ENCODE measurements at regions of chr16 and their contacts with region 1.

Region 1: DNA sequence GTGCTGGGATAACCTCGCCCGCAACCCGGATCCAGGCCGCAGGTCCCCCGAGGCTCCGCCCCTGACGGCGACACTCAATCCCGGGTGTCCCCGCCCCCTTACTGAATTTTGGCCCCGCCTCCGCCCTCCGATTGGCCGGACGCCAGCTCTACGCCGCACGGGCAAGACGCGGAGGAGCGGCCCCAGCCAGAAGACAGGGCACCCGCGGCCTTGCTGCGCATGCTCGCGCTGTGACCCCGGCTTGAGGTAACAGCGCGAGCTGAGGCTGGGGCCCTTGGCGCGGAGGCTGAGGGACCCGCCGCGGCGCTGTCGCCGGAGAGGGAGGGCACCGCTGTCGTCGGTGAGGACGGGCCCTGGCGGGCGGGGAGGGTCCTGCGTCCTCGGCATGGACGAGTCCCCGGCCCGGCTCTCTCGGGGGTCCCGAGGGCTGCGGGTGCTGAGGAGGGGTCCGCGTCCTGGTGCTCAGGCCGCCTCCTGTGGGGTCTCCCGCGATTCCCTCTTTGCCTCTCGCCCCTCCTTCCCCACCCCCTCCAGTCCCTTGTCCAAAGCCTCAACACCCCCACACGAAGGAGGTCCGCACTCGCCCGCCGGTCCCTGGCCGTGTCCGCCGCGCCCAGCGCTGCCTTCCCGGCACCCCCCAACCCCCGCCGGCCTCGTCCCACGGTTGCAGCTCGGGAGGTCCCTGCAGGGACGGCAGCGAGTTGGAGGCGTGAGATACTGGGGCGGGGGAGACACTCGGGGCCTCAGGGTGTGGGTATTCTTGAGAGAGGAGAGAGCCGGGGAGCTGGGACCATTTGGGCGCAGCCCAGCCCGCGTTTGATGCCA is at the start of gene FLYWCH2:
- DNase-seq: peak; percentile 100
- ATAC-seq: peak; percentile 80
- H3K4me3 Mint-ChIP-seq: peak within 1 kb of the TSS; percentile 92
- H3K27ac Mint-ChIP-seq: peak within 1 kb of the TSS; percentile 98
- H3K4me1 Mint-ChIP-seq: peaks cover 18% of the 10 kb centered on the region
- H3K27me3 Mint-ChIP-seq: no peaks in the 10 kb centered on the region
- CTCF ChIP-seq: no peak
- total RNA-seq, gene FLYWCH2: 19.4 and 20.3 TPM in 2 replicates

Region 2: GRCh38 chr16:1991948-1992703 is 891.1 kb before region 1 on chr16:
- CTCF ChIA-PET with region 1: no interaction called
- POLR2A ChIA-PET with region 1: interaction called, 10 read pairs
- intact Hi-C with region 1: no loop called
- DNase-seq: peak; percentile 95
- ATAC-seq: peak; percentile 79
- H3K4me3 Mint-ChIP-seq: peak overlapping the region; percentile 82
- H3K27ac Mint-ChIP-seq: peak overlapping the region; percentile 88
- H3K4me1 Mint-ChIP-seq: peaks cover 29% of the 10 kb centered on the region
- H3K27me3 Mint-ChIP-seq: no peaks in the 10 kb centered on the region
- CTCF ChIP-seq: no peak

Region 3: GRCh38 chr16:2777231-2777902 is 105.9 kb before region 1 on chr16 and contains the start of gene ELOB:
- CTCF ChIA-PET with region 1: no interaction called
- POLR2A ChIA-PET with region 1: interaction called, 12 read pairs
- intact Hi-C with region 1: loop called (anchors 2 kb)
- DNase-seq: peak; percentile 92
- ATAC-seq: peak; percentile 94
- H3K4me3 Mint-ChIP-seq: peak within 1 kb of the TSS; percentile 94
- H3K27ac Mint-ChIP-seq: peak within 1 kb of the TSS; percentile 95
- H3K4me1 Mint-ChIP-seq: peaks cover 28% of the 10 kb centered on the region
- H3K27me3 Mint-ChIP-seq: no peaks in the 10 kb centered on the region
- CTCF ChIP-seq: no peak
- total RNA-seq, gene ELOB: 172 and 190 TPM in 2 replicates

Region 4: GRCh38 chr16:2897113-2897512 is 13.9 kb after region 1 on chr16:
- CTCF ChIA-PET with region 1: interaction called, 8 read pairs
- POLR2A ChIA-PET with region 1: interaction called, 26 read pairs
- intact Hi-C with region 1: loop called (anchors 1 kb)
- DNase-seq: peak; percentile 82
- ATAC-seq: peak; percentile 100
- H3K4me3 Mint-ChIP-seq: peak overlapping the region; percentile 55
- H3K27ac Mint-ChIP-seq: peak overlapping the region; percentile 69
- H3K4me1 Mint-ChIP-seq: peaks cover 17% of the 10 kb centered on the region
- H3K27me3 Mint-ChIP-seq: no peaks in the 10 kb centered on the region
- CTCF ChIP-seq: no peak

Region 5: GRCh38 chr16:2905431-2906387 is 22.5 kb after region 1 on chr16:
- CTCF ChIA-PET with region 1: interaction called, 12 read pairs
- POLR2A ChIA-PET with region 1: interaction called, 19 read pairs
- intact Hi-C with region 1: loop called (anchors 1 kb)
- DNase-seq: peak; percentile 82
- ATAC-seq: peak; percentile 80
- H3K4me3 Mint-ChIP-seq: peak overlapping the region; percentile 91
- H3K27ac Mint-ChIP-seq: peak overlapping the region; percentile 41
- H3K4me1 Mint-ChIP-seq: peaks cover 27% of the 10 kb centered on the region
- H3K27me3 Mint-ChIP-seq: no peaks in the 10 kb centered on the region
- CTCF ChIP-seq: no peak

Region 6: GRCh38 chr16:2911580-2912329 is 28.5 kb after region 1 on chr16 and contains the start of gene FLYWCH1:
- CTCF ChIA-PET with region 1: interaction called, 12 read pairs
- POLR2A ChIA-PET with region 1: interaction called, 27 read pairs
- intact Hi-C with region 1: no loop called
- DNase-seq: peak; percentile 96
- ATAC-seq: peak; percentile 97
- H3K4me3 Mint-ChIP-seq: peak within 1 kb of the TSS; percentile 93
- H3K27ac Mint-ChIP-seq: peak within 1 kb of the TSS; percentile 82
- H3K4me1 Mint-ChIP-seq: peaks cover 27% of the 10 kb centered on the region
- H3K27me3 Mint-ChIP-seq: no peaks in the 10 kb centered on the region
- CTCF ChIP-seq: no peak
- total RNA-seq, gene FLYWCH1: 53.5 and 59.9 TPM in 2 replicates

Region 7: GRCh38 chr16:2919511-2920255 is 36.4 kb after region 1 on chr16:
- CTCF ChIA-PET with region 1: interaction called, 11 read pairs
- POLR2A ChIA-PET with region 1: no interaction called
- intact Hi-C with region 1: no loop called
- DNase-seq: no peak
- ATAC-seq: peak; percentile 80
- H3K4me3 Mint-ChIP-seq: no peak overlapping the region
- H3K27ac Mint-ChIP-seq: no peak overlapping the region
- H3K4me1 Mint-ChIP-seq: peaks cover 4% of the 10 kb centered on the region
- H3K27me3 Mint-ChIP-seq: no peaks in the 10 kb centered on the region
- CTCF ChIP-seq: peak; percentile 89